ENCODE measurements at regions of chr14 and their contacts with region 1.

Region 1: DNA sequence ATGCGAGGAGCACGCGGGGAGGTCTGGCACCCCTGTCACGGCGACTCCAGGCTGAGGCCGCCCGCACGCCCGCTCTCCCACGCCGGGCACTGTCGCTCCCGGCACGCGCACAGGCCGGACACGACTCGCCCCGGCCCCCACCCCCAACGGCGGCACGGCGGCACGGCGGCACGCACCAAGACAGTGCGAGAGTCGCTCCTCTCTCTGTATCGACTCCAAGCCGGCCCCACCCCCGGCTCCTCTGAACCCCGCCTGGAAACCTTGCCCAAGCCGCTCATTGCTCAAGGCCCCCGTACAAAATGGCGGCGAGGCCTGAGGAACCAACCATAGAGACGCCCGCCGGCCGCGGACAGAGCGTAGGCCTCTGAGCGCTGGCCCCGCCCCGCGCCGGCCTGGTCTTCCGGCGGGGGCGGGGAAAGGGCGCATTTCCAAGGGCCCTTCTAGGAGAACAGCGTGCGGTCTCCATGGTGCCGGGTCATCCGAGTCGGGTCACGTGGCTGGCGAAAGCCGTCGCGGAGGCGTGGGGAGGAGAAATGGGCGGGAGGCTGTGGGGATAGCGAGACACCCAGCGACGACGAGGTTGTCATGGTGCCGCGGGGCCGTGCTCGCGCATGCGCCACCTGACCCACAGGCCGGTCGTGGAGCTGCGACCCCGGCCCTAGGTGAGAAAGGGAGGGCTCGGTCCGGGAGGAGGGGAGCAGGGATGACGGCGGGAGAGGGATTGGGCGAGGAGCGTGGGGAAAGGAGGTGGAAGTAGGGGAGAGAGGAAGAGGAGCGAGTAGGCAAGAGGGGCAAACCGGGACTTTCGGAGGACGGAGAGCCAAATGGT is at the start of gene CIPC:
- DNase-seq: peak; percentile 99
- H3K4me3 ChIP-seq: peak within 1 kb of the TSS; percentile 91
- H3K4me3 Mint-ChIP-seq: peak within 1 kb of the TSS; percentile 90
- H3K27ac Mint-ChIP-seq: peak within 1 kb of the TSS; percentile 97
- H3K4me1 ChIP-seq: peaks cover 5% of the 10 kb centered on the region; the same call in 1 of the 2 replicates
- H3K4me1 Mint-ChIP-seq: peaks cover 11% of the 10 kb centered on the region
- H3K27me3 ChIP-seq: no peaks in the 10 kb centered on the region
- H3K27me3 Mint-ChIP-seq: no peaks in the 10 kb centered on the region
- CTCF ChIP-seq: no peak
- total RNA-seq, gene CIPC: 12.8 and 15.4 TPM in 2 replicates

Region 2: DNA sequence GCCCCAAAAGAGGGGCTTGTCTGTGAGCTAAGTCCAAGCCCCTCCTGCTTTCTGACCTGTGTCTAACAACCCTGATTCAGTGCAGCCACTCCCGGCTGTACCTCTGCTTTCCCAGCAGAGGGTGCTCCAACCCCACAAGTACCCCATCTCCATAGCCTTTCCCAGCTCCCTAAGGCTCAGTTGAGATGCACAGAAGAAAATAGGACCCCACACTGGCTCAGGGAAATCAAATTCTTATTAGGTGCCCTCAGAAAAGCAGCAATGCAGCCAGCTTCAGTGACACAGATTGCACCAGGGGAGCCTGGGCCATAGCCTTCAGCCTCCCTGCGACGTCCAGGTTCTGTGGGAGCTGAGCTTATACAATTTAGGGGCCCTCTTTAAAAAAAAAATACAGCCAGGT is 221.8 kb before region 1 on chr14:
- CTCF ChIA-PET with region 1: interaction called, 8 read pairs
- POLR2A ChIA-PET with region 1: no interaction called
- intact Hi-C with region 1: loop called (anchors 1 kb)
- DNase-seq: peak; percentile 63 to 71
- H3K4me3 ChIP-seq: no peak overlapping the region
- H3K4me3 Mint-ChIP-seq: no peak overlapping the region
- H3K27ac Mint-ChIP-seq: no peak overlapping the region
- H3K4me1 ChIP-seq: no peaks in the 10 kb centered on the region
- H3K4me1 Mint-ChIP-seq: no peaks in the 10 kb centered on the region
- H3K27me3 ChIP-seq: no peaks in the 10 kb centered on the region
- H3K27me3 Mint-ChIP-seq: no peaks in the 10 kb centered on the region
- CTCF ChIP-seq: peak; percentile 86 to 94

Region 3: GRCh38 chr14:77067632-77068514 is 30.0 kb before region 1 on chr14:
- CTCF ChIA-PET with region 1: interaction called, 9 read pairs
- POLR2A ChIA-PET with region 1: no interaction called
- intact Hi-C with region 1: loop called (anchors 1 kb)
- DNase-seq: peak; percentile 65 to 82
- H3K4me3 ChIP-seq: no peak overlapping the region
- H3K4me3 Mint-ChIP-seq: no peak overlapping the region
- H3K27ac Mint-ChIP-seq: no peak overlapping the region
- H3K4me1 ChIP-seq: no peaks in the 10 kb centered on the region
- H3K4me1 Mint-ChIP-seq: no peaks in the 10 kb centered on the region
- H3K27me3 ChIP-seq: no peaks in the 10 kb centered on the region
- H3K27me3 Mint-ChIP-seq: no peaks in the 10 kb centered on the region
- CTCF ChIP-seq: peak; percentile 87 to 94

Region 4: DNA sequence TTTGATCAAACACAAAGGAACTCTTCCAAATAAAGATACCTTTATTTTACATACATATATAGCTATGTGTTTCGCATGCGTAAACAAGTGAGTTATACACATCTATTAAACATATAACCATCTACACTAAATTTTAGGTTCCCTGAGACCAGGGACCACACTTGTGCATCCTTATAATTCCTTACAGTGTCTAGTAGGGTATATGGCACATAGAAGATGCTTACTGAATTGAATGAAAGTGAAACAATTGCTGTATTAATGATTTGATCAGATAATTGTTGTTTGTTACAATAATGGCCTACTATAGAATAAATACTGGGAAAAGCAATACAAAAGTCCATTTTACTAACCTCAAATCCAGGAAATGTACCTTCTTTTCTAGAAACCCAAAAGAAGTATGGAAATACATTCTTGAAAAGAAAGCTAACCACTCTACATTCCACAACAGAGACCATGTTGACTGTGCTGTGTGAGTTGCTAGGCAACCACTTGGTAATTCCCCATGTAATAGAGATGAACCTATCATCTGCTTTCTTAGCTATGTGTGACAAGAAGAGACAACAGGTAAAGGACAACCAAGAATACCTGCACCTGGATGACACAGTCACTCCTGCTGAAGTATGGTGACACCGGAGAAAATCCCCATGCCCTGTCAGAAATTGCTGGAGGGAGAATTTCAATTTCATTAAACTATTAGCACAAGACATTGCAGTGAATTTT is 11.7 kb before region 1 on chr14:
- CTCF ChIA-PET with region 1: interaction called, 7 read pairs
- POLR2A ChIA-PET with region 1: no interaction called
- intact Hi-C with region 1: loop called (anchors 1 kb)
- DNase-seq: peak in 1 of 2 experiments; percentile 66
- H3K4me3 ChIP-seq: no peak overlapping the region
- H3K4me3 Mint-ChIP-seq: no peak overlapping the region
- H3K27ac Mint-ChIP-seq: peak overlapping the region; percentile 75
- H3K4me1 ChIP-seq: peaks cover 31% of the 10 kb centered on the region
- H3K4me1 Mint-ChIP-seq: peaks cover 24% of the 10 kb centered on the region
- H3K27me3 ChIP-seq: no peaks in the 10 kb centered on the region
- H3K27me3 Mint-ChIP-seq: no peaks in the 10 kb centered on the region
- CTCF ChIP-seq: no peak

Region 5: GRCh38 chr14:77111043-77111442 is 13.1 kb after region 1 on chr14:
- CTCF ChIA-PET with region 1: no interaction called
- POLR2A ChIA-PET with region 1: no interaction called
- intact Hi-C with region 1: loop called (anchors 1 kb)
- DNase-seq: peak in 1 of 2 experiments; percentile 63
- H3K4me3 ChIP-seq: no peak overlapping the region
- H3K4me3 Mint-ChIP-seq: no peak overlapping the region
- H3K27ac Mint-ChIP-seq: peak overlapping the region; percentile 88
- H3K4me1 ChIP-seq: no peaks in the 10 kb centered on the region
- H3K4me1 Mint-ChIP-seq: peaks cover 8% of the 10 kb centered on the region
- H3K27me3 ChIP-seq: no peaks in the 10 kb centered on the region
- H3K27me3 Mint-ChIP-seq: no peaks in the 10 kb centered on the region
- CTCF ChIP-seq: no peak

Region 6: DNA sequence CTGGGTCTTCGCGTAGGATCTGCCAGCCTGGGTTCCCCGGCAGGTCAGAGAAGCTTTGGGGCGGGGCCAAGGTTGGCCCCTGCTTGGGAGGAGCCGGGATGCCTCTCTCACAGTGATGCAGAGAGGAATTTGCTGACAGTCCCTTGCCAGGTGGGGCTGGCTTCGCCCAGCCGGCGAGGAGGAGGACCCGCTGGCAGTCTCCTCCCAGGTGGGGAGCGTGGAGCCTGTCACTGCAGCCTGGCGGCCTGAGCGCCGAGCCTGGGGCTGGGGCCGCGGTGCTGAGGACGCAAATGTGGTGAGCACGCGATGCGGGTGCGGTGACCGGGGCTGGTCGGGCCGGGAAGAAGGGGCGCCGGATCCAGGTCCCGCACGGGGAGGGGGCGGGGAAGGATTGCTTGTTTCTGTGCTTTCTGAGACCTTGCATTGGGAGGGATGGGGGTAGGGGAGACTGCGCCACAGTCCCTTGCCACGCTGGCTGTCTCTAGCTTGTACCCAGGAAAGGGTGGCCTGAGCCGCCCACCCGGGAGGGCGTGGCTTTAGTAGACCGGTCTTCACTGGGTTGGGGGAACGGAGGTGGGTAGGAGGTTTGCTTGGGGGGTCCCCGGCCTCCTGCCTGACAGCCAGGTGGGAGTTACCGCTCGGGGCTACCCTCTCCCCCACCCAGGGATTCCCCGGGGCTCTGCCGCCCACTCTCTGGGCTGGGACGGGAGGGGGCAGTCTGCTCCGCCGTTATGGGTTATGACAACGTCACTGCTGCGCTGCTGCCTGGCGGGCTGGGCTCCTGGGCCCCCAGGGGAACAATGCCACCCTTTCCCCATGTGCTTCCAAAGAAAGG is 83.9 kb after region 1 on chr14 and contains the start of gene TMEM63C:
- CTCF ChIA-PET with region 1: no interaction called
- POLR2A ChIA-PET with region 1: interaction called, 12 read pairs
- intact Hi-C with region 1: no loop called
- DNase-seq: peak; percentile 90 to 93
- H3K4me3 ChIP-seq: peak within 1 kb of the TSS; percentile 55
- H3K4me3 Mint-ChIP-seq: peak within 1 kb of the TSS; percentile 76
- H3K27ac Mint-ChIP-seq: no peak within 1 kb of the TSS
- H3K4me1 ChIP-seq: peaks cover 28% of the 10 kb centered on the region
- H3K4me1 Mint-ChIP-seq: peaks cover 11% of the 10 kb centered on the region
- H3K27me3 ChIP-seq: no peaks in the 10 kb centered on the region
- H3K27me3 Mint-ChIP-seq: peaks cover 3% of the 10 kb centered on the region
- CTCF ChIP-seq: peak in 1 of 2 experiments; percentile 2
- total RNA-seq, gene TMEM63C: 1.3 and 1.4 TPM in 2 replicates

Region 7: DNA sequence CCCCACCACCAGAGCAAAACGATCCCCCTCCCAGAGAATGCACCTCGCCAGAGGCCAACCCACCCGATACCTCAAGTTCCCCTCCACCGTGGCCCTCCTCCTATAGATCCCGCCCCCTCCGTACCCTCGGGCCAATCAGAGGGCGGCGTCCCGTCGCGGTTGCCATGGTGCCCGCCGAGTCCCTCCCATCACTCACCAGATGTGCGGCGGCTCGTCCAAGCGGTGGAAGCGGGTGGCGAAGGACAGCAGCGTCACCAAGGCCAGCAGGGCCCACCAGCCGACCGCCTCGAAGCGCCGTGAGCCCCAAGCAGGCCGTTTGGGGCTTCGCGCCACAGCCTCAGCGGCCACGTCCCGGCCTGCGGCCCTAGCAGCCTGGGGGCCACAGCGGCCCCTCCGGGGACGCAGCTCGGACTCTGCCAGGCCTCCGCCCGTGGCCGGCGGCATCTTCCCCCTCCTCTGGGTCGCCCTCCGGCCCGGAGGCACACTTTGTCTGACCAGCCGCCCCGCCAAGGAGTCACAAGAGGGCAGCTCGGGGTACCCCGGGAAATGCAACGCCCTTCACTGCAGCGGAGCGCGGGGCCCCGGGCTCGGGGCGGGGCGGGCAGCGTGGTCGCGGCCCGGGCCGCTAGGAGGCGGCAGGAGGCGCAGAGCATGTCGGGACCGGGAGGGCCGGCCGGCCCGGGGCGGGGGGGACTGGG is 222.5 kb after region 1 on chr14 and contains the start of gene POMT2:
- CTCF ChIA-PET with region 1: interaction called, 5 read pairs
- POLR2A ChIA-PET with region 1: no interaction called
- intact Hi-C with region 1: loop called (anchors 2 kb)
- DNase-seq: peak; percentile 95 to 96
- H3K4me3 ChIP-seq: peak within 1 kb of the TSS; percentile 98
- H3K4me3 Mint-ChIP-seq: peak within 1 kb of the TSS; percentile 99
- H3K27ac Mint-ChIP-seq: peak within 1 kb of the TSS; percentile 100
- H3K4me1 ChIP-seq: peaks cover 11% of the 10 kb centered on the region
- H3K4me1 Mint-ChIP-seq: peaks cover 7% of the 10 kb centered on the region
- H3K27me3 ChIP-seq: no peaks in the 10 kb centered on the region
- H3K27me3 Mint-ChIP-seq: no peaks in the 10 kb centered on the region
- CTCF ChIP-seq: peak; percentile 25 to 71
- total RNA-seq, gene POMT2: 30.4 and 36.9 TPM in 2 replicates